Motor neuron (in vitro differentiated cells): ENCODE measurements at regions of chr18 and their contacts with region 1.

Region 1: DNA sequence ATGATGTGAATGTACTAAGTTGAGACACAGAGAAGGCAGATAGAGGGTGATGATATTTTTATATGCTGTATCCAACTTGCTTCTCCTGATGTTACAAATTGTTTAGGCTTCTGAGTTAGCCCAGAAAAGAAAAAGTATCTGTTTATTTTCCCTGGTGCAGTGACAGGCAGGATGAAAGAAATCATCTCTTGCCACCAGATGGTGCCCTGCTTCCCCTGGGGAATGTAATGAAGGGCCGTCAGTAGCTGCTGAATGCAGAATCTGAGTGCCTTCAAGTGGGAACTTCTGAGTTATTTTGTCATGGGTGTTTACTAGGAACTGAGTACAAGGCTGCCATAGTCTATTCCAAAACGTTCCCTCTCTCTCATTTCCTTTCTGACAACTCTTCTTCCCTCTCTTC is 525.6 kb downstream of the MBD2 start:
- ATAC-seq: peak in 5 of 8 experiments; percentile 47 to 92 (median 84)
- H3K4me3 ChIP-seq: no peak overlapping the region
- H3K27ac ChIP-seq: no peak overlapping the region
- H3K4me1 ChIP-seq: no peaks in the 10 kb centered on the region

Region 2: GRCh38 chr18:52747869-52748268 is 951.0 kb before region 1 on chr18:
- in situ Hi-C with region 1: no loop called
- ATAC-seq: no peak
- H3K4me3 ChIP-seq: no peak overlapping the region
- H3K27ac ChIP-seq: no peak overlapping the region
- H3K4me1 ChIP-seq: peaks cover 0 to 2% of the 10 kb centered on the region in 2 donors

Region 3: GRCh38 chr18:53603276-53603675 is 95.6 kb before region 1 on chr18:
- in situ Hi-C with region 1: loop called in 1 of 9 experiments (anchors 25 kb)
- ATAC-seq: peak in 1 of 8 experiments; percentile 29
- H3K4me3 ChIP-seq: no peak overlapping the region
- H3K27ac ChIP-seq: no peak overlapping the region
- H3K4me1 ChIP-seq: no peaks in the 10 kb centered on the region

Region 4: GRCh38 chr18:54119524-54120019 is 420.7 kb after region 1 on chr18:
- in situ Hi-C with region 1: loop called in 1 of 9 experiments (anchors 10 kb)
- ATAC-seq: peak; percentile 56 to 94 (median 75)
- H3K4me3 ChIP-seq: no peak overlapping the region
- H3K27ac ChIP-seq: no peak overlapping the region
- H3K4me1 ChIP-seq: peaks cover 0 to 25% of the 10 kb centered on the region in 2 donors

Region 5: DNA sequence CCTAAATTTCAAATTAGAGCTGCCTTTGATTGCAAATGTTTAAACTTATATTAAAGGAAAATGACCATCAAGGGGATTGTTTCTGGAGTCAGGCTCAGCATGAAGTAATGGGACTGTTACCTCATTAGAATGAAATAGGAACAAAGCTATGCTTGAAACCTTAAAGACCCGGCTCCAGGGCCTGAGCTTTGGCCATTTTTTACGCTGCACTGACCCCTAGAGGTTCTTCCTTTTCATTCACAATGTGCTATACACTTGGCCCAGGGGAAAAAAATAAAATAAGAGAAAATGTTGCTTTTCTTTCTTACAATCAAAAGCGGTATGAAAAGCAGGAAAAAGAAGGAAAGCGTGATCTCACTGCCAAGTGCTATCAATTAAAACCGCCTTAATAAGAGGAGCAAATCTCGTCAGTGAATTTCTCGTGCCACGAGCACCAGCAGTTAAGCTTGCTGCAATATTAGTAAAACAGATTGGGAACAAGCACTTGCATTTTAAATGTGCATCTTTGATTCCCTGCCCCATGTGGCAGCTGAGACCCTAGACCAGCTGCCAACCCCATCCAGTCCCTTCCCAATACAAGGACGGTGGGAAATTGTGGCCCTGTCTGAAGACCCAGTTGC is 429.0 kb after region 1 on chr18:
- in situ Hi-C with region 1: loop called in 2 of 9 experiments (anchors 10 to 25 kb)
- ATAC-seq: peak; percentile 79 to 97 (median 90)
- H3K4me3 ChIP-seq: no peak overlapping the region
- H3K27ac ChIP-seq: no peak overlapping the region
- H3K4me1 ChIP-seq: peaks cover 3 to 9% of the 10 kb centered on the region in 2 donors